Activated T-helper 2 cell treated with anti-CD3 and anti-CD28 coated beads, Interferon-gamma antibody, Interleukin-2, Interleukin-4, amounts not matched to agents 10 μg/mL and 5 μg/mL and 100 μg/mL, durations not matched to agents 14 hours and 24 hours and 36 hours (primary cell): ENCODE measurements at regions of chr6 and their contacts with region 1.

Region 1: DNA sequence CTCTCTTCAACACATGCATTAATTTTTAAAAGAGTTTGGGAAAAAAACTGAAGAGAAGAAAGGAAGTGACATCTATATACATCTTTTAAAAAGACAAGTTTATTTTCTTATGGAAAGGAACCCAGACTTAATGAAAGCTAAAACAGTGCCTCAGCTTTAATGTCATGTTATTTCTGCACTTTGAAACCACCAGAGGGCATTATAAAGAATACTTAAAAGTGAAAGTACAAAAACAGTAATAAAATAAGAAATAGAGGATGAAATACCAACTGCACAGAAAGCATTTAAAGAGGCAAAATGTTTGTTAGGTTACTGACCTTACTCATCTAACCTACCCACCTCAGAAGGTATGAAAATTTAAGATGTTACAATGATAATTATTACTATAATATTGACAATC is 98.8 kb downstream of the HUS1B start:
- DNase-seq: no peak
- H3K4me3 Mint-ChIP-seq: no peak overlapping the region
- H3K27ac Mint-ChIP-seq: peak overlapping the region; percentile 88
- H3K4me1 Mint-ChIP-seq: peaks cover 63% of the 10 kb centered on the region
- H3K27me3 Mint-ChIP-seq: no peaks in the 10 kb centered on the region

Region 2: GRCh38 chr6:219641-220198 is 338.4 kb before region 1 on chr6:
- intact Hi-C with region 1: loop called (anchors 10 kb)
- DNase-seq: no peak
- H3K4me3 Mint-ChIP-seq: no peak overlapping the region
- H3K27ac Mint-ChIP-seq: no peak overlapping the region
- H3K4me1 Mint-ChIP-seq: peaks cover 69% of the 10 kb centered on the region
- H3K27me3 Mint-ChIP-seq: no peaks in the 10 kb centered on the region

Region 3: DNA sequence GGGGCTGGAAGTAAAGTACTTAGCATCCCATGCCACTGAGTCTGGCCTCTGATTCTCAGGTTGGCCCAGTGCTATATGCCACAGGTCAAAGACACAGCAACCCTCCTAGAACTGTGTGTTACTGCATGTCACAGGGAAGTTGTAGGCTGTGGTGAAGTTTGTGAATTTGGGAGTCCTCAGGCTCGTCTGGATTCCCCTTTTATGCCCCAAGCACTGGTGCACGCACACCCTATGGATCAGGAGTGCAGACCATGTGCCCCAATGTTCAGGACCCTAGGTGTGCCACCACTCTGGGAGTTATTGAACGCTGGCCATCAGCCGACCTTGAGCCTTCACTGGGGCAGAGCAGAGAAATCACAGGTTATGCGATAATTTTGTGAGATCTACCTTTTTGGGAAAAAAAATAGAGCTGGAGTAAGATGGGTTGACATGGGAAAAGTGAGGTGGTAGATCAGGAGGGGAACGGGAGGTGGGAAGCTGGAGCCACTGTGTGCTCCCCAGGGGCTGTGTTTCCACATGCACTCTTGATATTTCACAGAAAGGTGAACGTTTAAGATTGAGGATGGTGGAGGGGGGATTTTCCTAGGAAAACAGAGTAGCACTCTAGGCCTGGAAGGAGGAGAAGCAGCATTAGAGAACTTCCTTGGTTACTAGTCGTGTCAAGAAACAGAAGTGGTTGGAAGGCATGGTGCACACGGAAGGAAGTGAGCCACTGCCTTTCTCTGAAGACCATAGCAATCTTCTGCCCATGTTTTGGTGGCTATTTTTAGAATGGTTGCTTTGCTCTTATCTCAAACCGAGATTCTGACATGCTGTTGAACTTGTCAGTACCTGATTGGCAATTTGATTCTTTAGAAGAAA is 221.7 kb before region 1 on chr6:
- intact Hi-C with region 1: loop called (anchors 5 kb)
- DNase-seq: peak; percentile 23
- H3K4me3 Mint-ChIP-seq: peak overlapping the region; percentile 35
- H3K27ac Mint-ChIP-seq: peak overlapping the region; percentile 74
- H3K4me1 Mint-ChIP-seq: peaks cover 55% of the 10 kb centered on the region
- H3K27me3 Mint-ChIP-seq: no peaks in the 10 kb centered on the region

Region 4: DNA sequence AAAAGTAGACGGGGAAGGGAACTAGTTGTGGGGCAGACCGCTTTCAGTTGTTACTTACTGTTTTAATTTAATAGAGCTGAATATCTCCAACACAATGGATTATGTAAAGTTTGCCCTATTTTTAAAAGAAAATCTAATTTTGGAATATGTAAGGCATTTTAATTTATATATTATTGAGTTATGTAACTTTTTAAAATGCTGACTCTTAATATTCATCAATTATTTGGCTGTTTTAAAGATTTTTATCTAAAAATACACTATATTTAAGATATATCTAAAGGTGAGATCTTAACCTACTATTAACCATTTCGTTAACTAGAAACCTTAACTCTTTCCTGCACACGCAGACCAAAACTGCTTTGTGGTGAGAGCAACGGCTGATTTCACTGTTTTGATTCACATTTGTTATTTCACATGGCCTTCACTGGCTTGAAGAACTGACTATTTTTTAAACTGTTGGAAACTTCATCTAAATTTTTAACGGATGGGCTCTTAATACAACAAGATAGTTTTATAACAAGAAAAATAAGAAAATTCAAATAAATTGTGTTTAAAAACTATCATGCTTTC is 10.9 kb after region 1 on chr6:
- intact Hi-C with region 1: loop called (anchors 1 kb)
- DNase-seq: no peak
- H3K4me3 Mint-ChIP-seq: peak overlapping the region; percentile 26
- H3K27ac Mint-ChIP-seq: peak overlapping the region; percentile 82
- H3K4me1 Mint-ChIP-seq: peaks cover 65% of the 10 kb centered on the region
- H3K27me3 Mint-ChIP-seq: no peaks in the 10 kb centered on the region